ENCODE measurements at regions of chr4 and their contacts with region 1.

Region 1: GRCh38 chr4:182806259-182807252 is 110.6 kb downstream of the DCTD start:
- DNase-seq: peak; percentile 58 to 84 (median 68)
- H3K4me3 ChIP-seq: peak overlapping the region; percentile 34 to 75 (median 58)
- H3K27ac ChIP-seq: peak overlapping the region in 7 of 59 donors; percentile 38 to 73 (median 50)
- H3K27me3 ChIP-seq: peaks cover 0 to 4% (median 0%) of the 10 kb centered on the region in 45 donors
- CTCF ChIP-seq: peak; percentile 58 to 97 (median 86)

Region 2: DNA sequence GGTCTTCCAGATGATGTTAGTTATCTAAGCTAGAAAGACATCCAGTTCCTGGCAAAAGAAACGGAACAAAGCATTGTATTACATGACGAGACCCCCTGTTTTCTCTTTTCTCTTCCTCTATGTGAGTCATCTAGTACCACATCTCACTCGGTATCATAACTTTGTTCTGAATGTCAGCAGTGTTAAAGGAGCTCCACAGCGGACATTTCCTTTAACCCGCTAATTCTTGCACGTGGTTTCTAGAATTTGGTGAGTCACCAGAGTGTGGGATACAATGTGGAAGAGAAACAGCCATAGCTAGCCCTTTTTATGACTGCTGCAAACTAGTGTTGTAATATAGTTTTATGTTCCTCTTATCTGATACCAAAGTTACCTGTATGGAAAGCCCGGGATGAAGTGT is 319.7 kb before region 1 on chr4:
- intact Hi-C with region 1: loop called in 1 of 2 experiments (anchors 10 kb)
- DNase-seq: no peak
- H3K4me3 ChIP-seq: no peak overlapping the region
- H3K27ac ChIP-seq: no peak overlapping the region
- H3K27me3 ChIP-seq: no peaks in the 10 kb centered on the region
- CTCF ChIP-seq: no peak

Region 3: GRCh38 chr4:183430317-183430993 is 623.9 kb after region 1 on chr4:
- intact Hi-C with region 1: no loop called
- DNase-seq: no peak
- H3K4me3 ChIP-seq: no peak overlapping the region
- H3K27ac ChIP-seq: peak overlapping the region in 4 of 59 donors; percentile 12 to 28 (median 20)
- H3K27me3 ChIP-seq: no peaks in the 10 kb centered on the region
- CTCF ChIP-seq: no peak

Measured in dorsolateral prefrontal cortex (tissue), 120 donors.